ENCODE measurements at regions of chr9 and their contacts with region 1.

Region 1: GRCh38 chr9:87336914-87337333 is 160.7 kb upstream of the DAPK1 start:
- DNase-seq: peak in 5 of 6 donors; percentile 48 to 74 (median 68)
- ATAC-seq: peak; percentile 82 to 91 (median 90)
- H3K4me3 ChIP-seq: peak overlapping the region in 3 of 4 donors; percentile 0 to 38 (median 25)
- H3K27ac ChIP-seq: peak overlapping the region in 2 of 4 donors; percentile 15 to 60
- H3K4me1 ChIP-seq: peaks cover 3 to 9% (median 8%) of the 10 kb centered on the region in 3 donors
- H3K27me3 ChIP-seq: no peaks in the 10 kb centered on the region
- CTCF ChIP-seq: peak; percentile 39 to 50 (median 48)

Region 2: DNA sequence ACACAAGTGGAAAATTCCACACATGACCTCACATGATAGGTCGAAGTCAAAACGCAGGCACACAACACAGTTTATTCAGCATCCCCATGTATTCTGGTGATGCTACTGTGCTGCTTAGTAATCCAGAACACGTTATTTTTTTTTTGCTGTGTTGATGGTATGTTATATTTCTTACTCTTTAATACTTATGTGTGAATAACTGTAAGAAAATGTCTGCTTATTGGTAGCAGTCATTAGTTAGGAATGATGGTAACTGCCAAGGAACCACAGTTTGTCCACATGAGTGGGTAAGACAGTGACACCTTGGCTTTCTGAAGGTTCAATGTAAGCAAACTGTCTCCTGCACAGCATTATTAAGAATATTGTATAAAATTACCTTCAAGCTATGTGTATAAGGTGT is 53.0 kb after region 1 on chr9:
- intact Hi-C with region 1: loop called in 1 of 3 experiments (anchors 5 kb)
- DNase-seq: no peak
- ATAC-seq: no peak
- H3K4me3 ChIP-seq: no peak overlapping the region
- H3K27ac ChIP-seq: no peak overlapping the region
- H3K4me1 ChIP-seq: peaks cover 4 to 21% (median 6%) of the 10 kb centered on the region in 3 donors
- H3K27me3 ChIP-seq: no peaks in the 10 kb centered on the region
- CTCF ChIP-seq: no peak

Region 3: DNA sequence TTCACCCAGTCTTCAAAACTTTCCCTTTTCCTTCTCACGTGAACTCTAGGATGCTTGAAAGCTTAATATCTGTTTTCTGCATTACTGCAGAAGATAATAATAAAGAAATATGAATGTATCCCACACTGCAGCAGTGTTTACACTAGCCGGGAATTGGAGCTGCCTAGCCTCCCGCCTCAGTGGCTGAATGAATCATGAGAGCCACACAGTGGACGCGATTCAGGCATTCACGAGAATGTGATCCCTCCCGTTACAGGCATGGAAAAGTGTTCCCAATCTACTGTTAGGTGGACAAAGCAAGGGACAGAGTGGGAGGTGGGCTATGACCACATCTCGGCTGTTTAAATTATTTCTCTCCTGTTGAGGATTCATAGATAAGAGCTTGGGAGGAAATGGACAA is 319.6 kb after region 1 on chr9:
- intact Hi-C with region 1: loop called in 2 of 3 experiments (anchors 5 kb)
- DNase-seq: no peak
- ATAC-seq: peak in 3 of 4 donors; percentile 48 to 66 (median 57)
- H3K4me3 ChIP-seq: no peak overlapping the region
- H3K27ac ChIP-seq: no peak overlapping the region
- H3K4me1 ChIP-seq: no peaks in the 10 kb centered on the region
- H3K27me3 ChIP-seq: no peaks in the 10 kb centered on the region
- CTCF ChIP-seq: no peak

Region 4: DNA sequence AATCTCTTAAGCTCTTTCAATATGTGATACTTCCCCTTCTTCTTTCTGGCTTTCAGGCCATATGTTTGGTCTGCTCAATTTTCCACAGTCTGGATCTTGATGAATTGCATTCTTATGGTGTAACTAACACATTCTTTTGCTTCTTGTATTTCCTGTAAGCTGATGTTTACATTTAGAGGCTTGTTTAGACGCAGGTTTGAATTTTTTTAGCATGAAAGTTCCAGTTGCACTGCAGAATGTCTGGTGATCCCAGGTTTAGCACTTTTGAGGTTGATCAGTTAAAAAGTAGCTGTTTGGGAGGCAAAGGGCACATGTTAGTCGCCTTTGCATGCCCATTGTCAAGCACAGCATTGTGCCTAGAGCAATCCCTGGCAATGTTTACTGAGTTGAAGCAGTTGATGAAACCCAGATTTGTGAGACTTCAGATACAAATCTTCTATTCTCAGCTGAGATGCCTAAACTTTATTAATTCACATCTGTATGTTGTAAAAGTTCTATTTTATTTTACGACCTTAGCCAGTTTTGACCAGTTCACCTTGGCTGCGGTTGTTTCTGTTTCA is 860.9 kb after region 1 on chr9:
- intact Hi-C with region 1: no loop called
- DNase-seq: no peak
- ATAC-seq: peak in 2 of 4 donors; percentile 37 to 57
- H3K4me3 ChIP-seq: no peak overlapping the region
- H3K27ac ChIP-seq: peak overlapping the region in 2 of 4 donors; percentile 36 to 62
- H3K4me1 ChIP-seq: peaks cover 0 to 15% (median 8%) of the 10 kb centered on the region in 3 donors
- H3K27me3 ChIP-seq: no peaks in the 10 kb centered on the region
- CTCF ChIP-seq: no peak

Measured in pancreas (tissue), 10 donors.